Activated CD4-positive, alpha-beta memory T cell treated with anti-CD3 and anti-CD28 coated beads for 36 hours (primary cell): ENCODE measurements at regions of chr7 and their contacts with region 1.

Region 1: DNA sequence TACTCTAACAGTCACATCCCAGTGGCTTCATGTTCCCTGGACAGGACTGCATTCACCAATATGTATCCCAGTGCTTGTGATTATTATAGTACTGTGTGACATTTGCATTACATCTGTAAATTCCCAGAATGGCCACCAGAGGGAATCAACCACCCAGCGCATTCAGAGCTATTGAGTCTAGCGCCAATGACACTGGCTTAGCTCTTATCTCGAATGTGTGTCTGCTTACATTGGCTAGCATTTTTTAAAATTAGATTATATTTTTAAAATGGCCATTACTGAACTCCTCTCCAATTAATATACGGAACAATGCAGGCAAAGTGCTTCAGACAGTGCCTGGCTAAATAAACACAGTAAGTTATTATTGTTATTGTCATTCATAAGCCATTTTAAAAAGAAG is 36.3 kb downstream of the TRIL start:
- DNase-seq: peak; percentile 39
- H3K4me3 Mint-ChIP-seq: no peak overlapping the region
- H3K27ac Mint-ChIP-seq: no peak overlapping the region
- H3K4me1 Mint-ChIP-seq: peaks cover 14% of the 10 kb centered on the region
- H3K27me3 Mint-ChIP-seq: peaks cover 10% of the 10 kb centered on the region

Region 2: DNA sequence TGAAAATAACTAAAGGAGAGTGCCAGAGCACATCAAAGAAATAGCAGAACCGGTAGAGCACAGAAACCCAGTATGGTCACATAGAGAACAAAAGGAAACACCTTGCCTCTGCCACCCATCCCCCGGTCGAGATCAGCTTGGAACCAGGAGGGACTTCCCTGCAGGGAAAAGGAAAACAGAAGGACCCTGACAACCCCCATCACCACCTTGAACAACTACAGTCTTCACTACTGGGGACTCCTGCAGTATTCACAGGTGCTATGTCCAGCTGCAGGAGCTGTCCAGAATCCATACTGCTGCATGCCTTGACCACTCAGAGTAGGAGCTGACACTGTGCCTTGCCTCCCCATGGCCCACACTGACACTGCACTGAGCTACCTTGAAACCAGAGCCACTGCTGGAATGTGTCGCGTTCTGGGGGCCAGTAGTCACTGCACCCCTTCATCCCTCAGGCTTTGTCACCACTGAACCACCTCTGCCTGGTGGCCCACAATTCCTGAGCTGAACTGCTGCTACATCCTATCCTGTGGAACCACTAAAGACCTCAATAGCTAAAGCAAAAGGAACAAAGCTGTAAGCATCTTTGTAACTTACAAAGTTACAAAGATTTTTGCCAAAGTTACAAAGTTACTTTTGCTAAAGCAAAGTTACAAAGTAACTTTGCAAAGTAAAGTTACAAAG is 30.5 kb before region 1 on chr7:
- CTCF ChIA-PET with region 1: interaction called, 11 read pairs
- POLR2A ChIA-PET with region 1: no interaction called
- intact Hi-C with region 1: no loop called
- DNase-seq: no peak
- H3K4me3 Mint-ChIP-seq: no peak overlapping the region
- H3K27ac Mint-ChIP-seq: no peak overlapping the region
- H3K4me1 Mint-ChIP-seq: no peaks in the 10 kb centered on the region
- H3K27me3 Mint-ChIP-seq: no peaks in the 10 kb centered on the region

Region 3: DNA sequence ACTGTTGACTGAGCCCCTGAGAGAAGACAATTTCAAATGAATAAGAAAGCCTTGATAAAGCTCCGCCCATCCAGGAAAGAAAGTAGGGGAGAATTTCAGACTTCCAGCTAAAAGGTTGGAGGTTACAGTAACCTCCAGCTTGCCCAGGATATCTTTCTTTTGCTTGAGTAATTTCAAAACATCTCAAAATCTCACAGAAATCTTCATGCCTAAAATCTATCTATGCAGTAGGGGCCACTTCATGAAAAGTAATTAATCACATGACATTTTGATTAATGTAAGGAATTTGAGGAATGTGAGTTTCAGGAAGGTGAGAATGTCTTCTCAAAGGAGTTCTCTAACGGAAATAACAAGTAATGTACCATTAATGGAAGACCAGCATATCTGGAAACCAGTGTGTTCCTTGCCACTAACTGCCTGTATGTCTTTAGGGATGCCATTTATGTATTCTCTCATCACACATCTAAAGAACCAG is 12.1 kb after region 1 on chr7:
- CTCF ChIA-PET with region 1: interaction called, 40 read pairs
- POLR2A ChIA-PET with region 1: interaction called, 3 read pairs
- intact Hi-C with region 1: no loop called
- DNase-seq: no peak
- H3K4me3 Mint-ChIP-seq: no peak overlapping the region
- H3K27ac Mint-ChIP-seq: no peak overlapping the region
- H3K4me1 Mint-ChIP-seq: no peaks in the 10 kb centered on the region
- H3K27me3 Mint-ChIP-seq: peaks cover 29% of the 10 kb centered on the region

Region 4: GRCh38 chr7:29105752-29106668 is 184.2 kb after region 1 on chr7:
- CTCF ChIA-PET with region 1: interaction called, 231 read pairs
- POLR2A ChIA-PET with region 1: no interaction called
- intact Hi-C with region 1: loop called (anchors 1 kb)
- DNase-seq: peak; percentile 12
- H3K4me3 Mint-ChIP-seq: no peak overlapping the region
- H3K27ac Mint-ChIP-seq: no peak overlapping the region
- H3K4me1 Mint-ChIP-seq: peaks cover 4% of the 10 kb centered on the region
- H3K27me3 Mint-ChIP-seq: peaks cover 7% of the 10 kb centered on the region

Region 5: GRCh38 chr7:29189743-29190201 is 267.9 kb after region 1 on chr7:
- CTCF ChIA-PET with region 1: interaction called, 18 read pairs
- POLR2A ChIA-PET with region 1: no interaction called
- intact Hi-C with region 1: loop called (anchors 5 kb)
- DNase-seq: peak; percentile 68
- H3K4me3 Mint-ChIP-seq: no peak overlapping the region
- H3K27ac Mint-ChIP-seq: no peak overlapping the region
- H3K4me1 Mint-ChIP-seq: peaks cover 2% of the 10 kb centered on the region
- H3K27me3 Mint-ChIP-seq: peaks cover 17% of the 10 kb centered on the region